MCF 10A (cell line): ENCODE measurements at regions of chr2 and their contacts with region 1.

Region 1: DNA sequence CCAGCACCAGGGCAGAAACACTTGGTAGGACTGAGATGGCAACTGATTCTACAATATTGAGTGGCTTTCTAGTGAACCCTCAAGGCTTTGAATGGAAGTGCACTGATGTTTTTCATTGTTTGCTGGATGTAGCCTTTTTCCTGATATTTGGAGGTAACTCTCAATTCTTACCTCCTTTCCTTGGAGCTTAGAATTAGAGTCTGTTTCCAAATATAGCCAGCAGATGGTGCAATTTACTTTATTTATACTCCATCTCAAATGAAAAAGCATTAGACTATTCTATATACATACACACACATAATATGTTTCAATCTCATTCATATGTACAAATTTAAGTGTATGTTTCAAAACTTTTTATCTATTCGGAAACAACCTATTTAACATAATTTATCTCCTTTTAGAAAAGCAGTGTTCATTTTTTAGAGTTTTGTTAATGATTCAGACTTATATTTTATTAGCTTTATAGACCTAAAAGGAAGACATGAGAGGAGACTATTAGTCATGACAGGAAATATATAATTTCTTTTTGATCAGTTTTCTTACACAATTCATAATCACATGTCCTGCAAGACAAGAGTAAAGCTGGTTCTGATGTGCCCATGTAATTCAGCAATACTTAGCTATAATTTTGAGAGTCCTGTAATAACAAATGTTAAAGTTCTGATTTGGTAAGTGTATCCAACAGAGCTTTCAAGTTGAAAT is 124.8 kb downstream of the NUP35 start:
- DNase-seq: peak; percentile 54
- H3K4me3 Mint-ChIP-seq: no peak overlapping the region
- H3K27ac Mint-ChIP-seq: no peak overlapping the region
- H3K4me1 Mint-ChIP-seq: no peaks in the 10 kb centered on the region
- H3K27me3 Mint-ChIP-seq: no peaks in the 10 kb centered on the region
- CTCF ChIP-seq: peak; percentile 31

Region 2: DNA sequence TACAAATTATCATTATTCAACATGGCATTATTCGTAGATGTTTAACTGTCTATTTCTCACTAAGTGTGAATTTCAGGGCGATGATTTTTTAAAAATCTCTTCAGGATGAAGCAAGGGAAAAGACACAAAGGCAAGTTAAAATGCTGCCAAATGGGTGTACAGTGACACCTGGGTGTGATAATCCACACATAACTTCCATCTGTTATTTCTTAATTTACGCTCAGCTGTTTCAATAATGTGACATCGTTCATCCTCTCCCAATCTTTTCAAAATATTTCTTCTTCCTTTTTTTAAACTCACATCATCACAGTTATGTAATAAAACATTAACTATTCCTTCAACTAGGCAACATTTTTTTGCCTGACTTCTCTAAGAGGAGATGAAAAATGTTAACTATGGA is 832.8 kb before region 1 on chr2:
- CTCF ChIA-PET with region 1: no interaction called
- POLR2A ChIA-PET with region 1: no interaction called
- intact Hi-C with region 1: no loop called
- DNase-seq: no peak
- H3K4me3 Mint-ChIP-seq: no peak overlapping the region
- H3K27ac Mint-ChIP-seq: no peak overlapping the region
- H3K4me1 Mint-ChIP-seq: no peaks in the 10 kb centered on the region
- H3K27me3 Mint-ChIP-seq: no peaks in the 10 kb centered on the region
- CTCF ChIP-seq: no peak

Region 3: DNA sequence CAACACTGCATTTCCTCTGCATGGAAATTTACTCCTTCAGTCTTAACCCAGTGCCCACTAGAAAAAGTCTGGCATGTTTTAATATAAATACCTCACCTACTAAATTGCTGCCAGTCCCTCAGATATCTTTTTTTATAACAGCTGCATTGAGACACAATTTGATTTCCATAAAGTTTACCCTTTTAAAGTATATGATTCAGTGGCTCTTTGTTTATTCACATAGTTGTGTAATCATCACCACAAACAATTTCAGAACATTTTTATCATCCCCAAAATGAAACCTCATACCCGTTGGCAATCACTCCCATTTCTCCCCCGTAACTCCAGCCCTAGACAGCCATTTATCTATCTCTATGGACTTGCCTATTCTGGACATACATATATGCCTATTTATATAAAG is 365.6 kb before region 1 on chr2:
- CTCF ChIA-PET with region 1: no interaction called
- POLR2A ChIA-PET with region 1: no interaction called
- intact Hi-C with region 1: no loop called
- DNase-seq: peak; percentile 56
- H3K4me3 Mint-ChIP-seq: no peak overlapping the region
- H3K27ac Mint-ChIP-seq: peak overlapping the region; percentile 32
- H3K4me1 Mint-ChIP-seq: peaks cover 8% of the 10 kb centered on the region
- H3K27me3 Mint-ChIP-seq: no peaks in the 10 kb centered on the region
- CTCF ChIP-seq: no peak

Region 4: DNA sequence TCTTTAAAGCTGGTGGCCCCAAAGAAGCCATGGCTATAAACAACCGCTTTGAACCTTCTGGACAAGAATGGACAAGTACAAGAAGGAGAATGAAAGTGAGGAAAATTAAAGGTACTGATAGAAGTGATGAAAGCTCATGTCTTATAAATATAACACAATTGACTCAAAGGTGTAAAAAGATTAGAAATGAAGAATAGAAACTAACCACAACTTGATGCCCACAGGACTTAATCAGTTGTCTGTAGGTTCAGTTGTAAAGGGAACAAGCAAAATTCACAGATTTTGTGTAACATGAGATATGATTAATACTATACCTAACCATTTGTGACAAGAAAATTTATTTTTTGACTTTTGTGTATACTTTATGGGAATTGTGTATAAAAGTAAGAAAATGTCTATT is 10.9 kb after region 1 on chr2:
- CTCF ChIA-PET with region 1: interaction called, 26 read pairs
- POLR2A ChIA-PET with region 1: interaction called, 3 read pairs
- intact Hi-C with region 1: no loop called
- DNase-seq: no peak
- H3K4me3 Mint-ChIP-seq: no peak overlapping the region
- H3K27ac Mint-ChIP-seq: no peak overlapping the region
- H3K4me1 Mint-ChIP-seq: no peaks in the 10 kb centered on the region
- H3K27me3 Mint-ChIP-seq: no peaks in the 10 kb centered on the region
- CTCF ChIP-seq: no peak

Region 5: DNA sequence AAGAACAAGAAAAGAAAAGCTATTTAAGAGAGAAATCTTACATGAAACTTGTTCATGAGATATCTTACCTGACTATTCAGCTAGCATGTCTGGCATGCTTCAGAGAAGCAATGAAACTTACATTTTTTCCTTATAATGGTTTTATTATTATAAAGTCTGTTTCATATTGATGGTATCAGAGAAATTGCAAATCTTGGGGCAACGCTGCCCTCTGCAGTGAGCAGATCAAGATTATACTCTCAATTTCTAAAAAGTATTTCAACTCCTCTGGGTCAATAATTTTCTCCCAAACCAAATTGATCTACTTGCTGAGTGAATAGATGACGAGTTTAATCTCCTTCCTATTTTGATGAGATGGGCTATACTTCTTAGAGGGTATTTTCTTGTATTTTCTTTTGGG is 110.8 kb after region 1 on chr2:
- CTCF ChIA-PET with region 1: interaction called, 208 read pairs
- POLR2A ChIA-PET with region 1: interaction called, 4 read pairs
- intact Hi-C with region 1: loop called (anchors 1 kb)
- DNase-seq: peak; percentile 35
- H3K4me3 Mint-ChIP-seq: no peak overlapping the region
- H3K27ac Mint-ChIP-seq: no peak overlapping the region
- H3K4me1 Mint-ChIP-seq: no peaks in the 10 kb centered on the region
- H3K27me3 Mint-ChIP-seq: no peaks in the 10 kb centered on the region
- CTCF ChIP-seq: peak; percentile 33

Region 6: DNA sequence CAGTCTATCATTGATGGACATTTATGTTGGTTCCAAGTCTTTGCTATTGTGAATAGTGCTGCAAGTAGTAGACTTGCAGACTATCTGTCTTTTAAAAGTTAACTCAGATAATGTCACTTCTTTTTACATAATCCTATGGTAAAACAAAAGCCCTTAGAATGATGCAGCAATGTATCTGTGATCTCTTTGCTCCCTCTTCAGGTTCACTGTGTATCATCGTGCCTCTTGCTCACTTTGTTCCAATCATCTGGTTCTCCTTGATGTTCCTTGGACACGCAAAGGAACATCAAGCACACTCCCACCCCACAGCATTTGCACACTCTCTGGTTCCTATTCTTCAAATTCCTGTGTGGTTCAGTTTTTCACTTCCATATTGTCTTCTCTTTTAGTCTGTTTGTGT is 876.9 kb after region 1 on chr2:
- CTCF ChIA-PET with region 1: no interaction called
- POLR2A ChIA-PET with region 1: no interaction called
- intact Hi-C with region 1: loop called (anchors 1 kb)
- DNase-seq: peak; percentile 4
- H3K4me3 Mint-ChIP-seq: no peak overlapping the region
- H3K27ac Mint-ChIP-seq: no peak overlapping the region
- H3K4me1 Mint-ChIP-seq: no peaks in the 10 kb centered on the region
- H3K27me3 Mint-ChIP-seq: no peaks in the 10 kb centered on the region
- CTCF ChIP-seq: no peak